GM10248 (cell line): ENCODE measurements at regions of chr4 and their contacts with region 1.

Region 1: GRCh38 chr4:10879411-10880110 is 195.0 kb upstream of the CLNK start:
- DNase-seq: no peak
- CTCF ChIP-seq: no peak

Region 2: GRCh38 chr4:10893395-10893794 is 13.8 kb after region 1 on chr4:
- CTCF ChIA-PET with region 1: interaction called, 42 read pairs
- POLR2A ChIA-PET with region 1: no interaction called
- DNase-seq: peak; percentile 12
- CTCF ChIP-seq: peak; percentile 37